Prostate gland (tissue), 2 donors: ENCODE measurements at regions of chr3 and their contacts with region 1.

Region 1: GRCh38 chr3:126287536-126288241 is 69.5 kb downstream of the KLF15 start:
- DNase-seq: peak; percentile 41
- H3K4me3 ChIP-seq: peak overlapping the region; percentile 20 to 32
- H3K27ac ChIP-seq: peak overlapping the region; percentile 42 to 69
- H3K4me1 ChIP-seq: no peaks in the 10 kb centered on the region
- H3K27me3 ChIP-seq: no peaks in the 10 kb centered on the region
- CTCF ChIP-seq: no peak
- POLR2A ChIP-seq: no peak

Region 2: GRCh38 chr3:126348308-126348920 is 60.7 kb after region 1 on chr3:
- intact Hi-C with region 1: loop called (anchors 5 kb)
- DNase-seq: no peak
- H3K4me3 ChIP-seq: no peak overlapping the region
- H3K27ac ChIP-seq: peak overlapping the region in 1 of 2 donors; percentile 16
- H3K4me1 ChIP-seq: no peaks in the 10 kb centered on the region
- H3K27me3 ChIP-seq: no peaks in the 10 kb centered on the region
- CTCF ChIP-seq: no peak
- POLR2A ChIP-seq: no peak